ENCODE measurements at regions of chr14 and their contacts with region 1.

Region 1: GRCh38 chr14:73339846-73340595 is 102.7 kb downstream of the PAPLN start:
- DNase-seq: no peak
- ATAC-seq: no peak
- H3K4me3 ChIP-seq: no peak overlapping the region
- H3K27ac ChIP-seq: no peak overlapping the region
- H3K4me1 ChIP-seq: peaks cover 3% of the 10 kb centered on the region; the same call in 1 of the 2 replicates
- H3K27me3 ChIP-seq: no peaks in the 10 kb centered on the region
- CTCF ChIP-seq: no peak
- POLR2A ChIP-seq: no peak
- RAD21 ChIP-seq: no peak

Region 2: DNA sequence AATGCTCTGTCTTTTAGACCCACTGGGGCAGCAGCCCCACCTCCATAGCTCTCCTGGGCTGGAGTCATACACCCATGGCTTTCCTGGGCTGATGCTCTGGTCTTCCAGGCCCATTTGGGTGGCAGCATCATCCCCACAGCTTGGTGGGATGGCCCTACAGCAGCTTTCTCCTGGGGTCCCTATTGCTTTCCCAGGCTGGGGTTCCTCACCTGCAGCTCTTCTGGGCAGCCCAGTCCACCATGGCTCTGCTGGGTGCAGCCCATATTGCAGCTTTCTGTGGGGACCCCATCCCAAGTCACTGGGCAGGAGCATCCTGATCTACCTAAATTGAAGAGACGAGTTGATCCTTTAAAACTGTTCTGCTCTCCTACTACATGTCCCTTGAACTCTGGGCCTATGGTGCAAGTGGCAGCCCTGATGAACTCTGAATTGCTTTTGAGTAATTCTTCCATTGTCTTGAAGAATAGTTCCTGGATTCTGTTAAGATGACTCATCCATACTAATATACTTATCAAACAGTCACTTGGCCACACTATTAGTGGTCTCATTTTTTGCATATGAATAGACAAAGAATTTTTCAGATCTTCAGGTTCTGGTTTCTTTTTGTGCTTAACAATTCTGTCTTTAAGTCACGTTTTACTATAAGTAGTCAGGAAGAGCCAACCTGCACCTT is 836.2 kb before region 1 on chr14:
- CTCF ChIA-PET with region 1: no interaction called
- POLR2A ChIA-PET with region 1: no interaction called
- dilution Hi-C with region 1: no loop called
- in situ Hi-C with region 1: no loop called
- intact Hi-C with region 1: no loop called
- DNase-seq: peak; percentile 23
- ATAC-seq: no peak
- H3K4me3 ChIP-seq: no peak overlapping the region
- H3K27ac ChIP-seq: no peak overlapping the region
- H3K4me1 ChIP-seq: no peaks in the 10 kb centered on the region
- H3K27me3 ChIP-seq: peaks cover 16% of the 10 kb centered on the region
- CTCF ChIP-seq: no peak
- POLR2A ChIP-seq: no peak
- RAD21 ChIP-seq: no peak

Region 3: GRCh38 chr14:72699852-72700257 is 640.2 kb before region 1 on chr14:
- CTCF ChIA-PET with region 1: no interaction called
- POLR2A ChIA-PET with region 1: no interaction called
- dilution Hi-C with region 1: no loop called
- in situ Hi-C with region 1: no loop called
- intact Hi-C with region 1: no loop called
- DNase-seq: peak; percentile 83
- ATAC-seq: peak; percentile 77
- H3K4me3 ChIP-seq: no peak overlapping the region
- H3K27ac ChIP-seq: peak overlapping the region; percentile 82; the same call in 1 of the 2 replicates
- H3K4me1 ChIP-seq: peaks cover 8% of the 10 kb centered on the region
- H3K27me3 ChIP-seq: no peaks in the 10 kb centered on the region
- CTCF ChIP-seq: no peak
- POLR2A ChIP-seq: no peak
- RAD21 ChIP-seq: no peak; the same call in 1 of the 2 replicates

Region 4: GRCh38 chr14:73162251-73162650 is 177.8 kb before region 1 on chr14:
- CTCF ChIA-PET with region 1: no interaction called
- POLR2A ChIA-PET with region 1: interaction called, 13 read pairs
- dilution Hi-C with region 1: no loop called
- in situ Hi-C with region 1: no loop called
- intact Hi-C with region 1: no loop called
- DNase-seq: no peak
- ATAC-seq: no peak
- H3K4me3 ChIP-seq: no peak overlapping the region
- H3K27ac ChIP-seq: no peak overlapping the region
- H3K4me1 ChIP-seq: no peaks in the 10 kb centered on the region
- H3K27me3 ChIP-seq: no peaks in the 10 kb centered on the region
- CTCF ChIP-seq: no peak
- POLR2A ChIP-seq: no peak
- RAD21 ChIP-seq: no peak

Region 5: DNA sequence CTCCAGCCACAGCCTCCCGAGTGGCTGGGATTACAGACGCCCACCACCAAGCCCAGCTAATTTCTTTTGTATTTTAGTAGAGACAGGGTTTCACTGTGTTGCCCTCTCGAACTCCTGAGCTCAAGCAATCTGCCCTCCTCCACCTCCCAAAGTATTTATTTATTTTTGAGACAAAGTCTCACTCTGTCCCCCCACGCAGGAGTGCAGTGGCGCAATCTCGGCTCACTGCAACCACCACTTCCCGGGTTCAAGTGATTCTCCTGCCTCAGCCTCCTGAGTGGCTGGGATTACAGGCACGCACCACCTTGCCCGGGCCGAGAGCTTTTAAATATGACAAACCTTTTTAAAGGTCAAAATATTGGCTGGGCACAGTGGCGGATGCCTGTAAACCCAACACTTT is 103.7 kb after region 1 on chr14:
- CTCF ChIA-PET with region 1: no interaction called
- POLR2A ChIA-PET with region 1: no interaction called
- dilution Hi-C with region 1: no loop called
- in situ Hi-C with region 1: no loop called
- intact Hi-C with region 1: no loop called
- DNase-seq: no peak
- ATAC-seq: no peak
- H3K4me3 ChIP-seq: no peak overlapping the region
- H3K27ac ChIP-seq: no peak overlapping the region
- H3K4me1 ChIP-seq: peaks cover 9% of the 10 kb centered on the region
- H3K27me3 ChIP-seq: no peaks in the 10 kb centered on the region
- CTCF ChIP-seq: no peak
- POLR2A ChIP-seq: no peak
- RAD21 ChIP-seq: no peak

Region 6: GRCh38 chr14:74549588-74549987 is 1209.6 kb after region 1 on chr14:
- CTCF ChIA-PET with region 1: no interaction called
- POLR2A ChIA-PET with region 1: no interaction called
- dilution Hi-C with region 1: no loop called
- in situ Hi-C with region 1: no loop called
- intact Hi-C with region 1: no loop called
- DNase-seq: no peak
- ATAC-seq: no peak
- H3K4me3 ChIP-seq: no peak overlapping the region
- H3K27ac ChIP-seq: no peak overlapping the region
- H3K4me1 ChIP-seq: peaks cover 27% of the 10 kb centered on the region
- H3K27me3 ChIP-seq: no peaks in the 10 kb centered on the region
- CTCF ChIP-seq: peak; percentile 39
- POLR2A ChIP-seq: no peak
- RAD21 ChIP-seq: no peak; the same call in 1 of the 2 replicates

Measured in IMR-90 (cell line).